ENCODE measurements at regions of chr3 and their contacts with region 1.

Region 1: DNA sequence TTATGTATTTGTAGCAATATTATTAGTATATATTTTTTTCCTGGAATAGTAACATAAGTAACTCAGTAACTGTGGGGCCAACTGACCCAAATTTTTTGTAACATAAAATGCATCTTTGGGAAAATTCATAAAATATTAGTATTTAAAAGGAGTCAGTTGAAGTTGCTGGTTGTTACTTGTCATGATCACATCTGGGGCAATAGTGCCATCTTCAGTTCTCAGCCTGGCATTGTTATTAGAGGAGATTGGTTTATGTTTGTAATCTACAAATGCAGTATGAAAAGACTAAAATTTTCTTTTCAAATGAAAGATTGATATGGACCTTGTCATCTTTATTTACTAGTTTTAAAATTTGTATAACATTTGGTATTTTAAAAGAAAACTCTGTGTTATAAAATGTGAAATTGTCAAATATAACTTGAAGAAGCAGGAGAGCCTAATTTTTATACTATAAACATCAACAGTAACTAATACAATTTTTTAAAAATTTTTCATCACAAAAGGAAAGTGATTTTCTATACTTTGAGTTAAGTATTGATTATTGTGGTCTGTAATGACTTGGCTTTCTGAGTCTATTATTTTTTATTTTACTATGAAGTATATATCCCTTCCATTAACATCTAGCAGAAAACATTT is 38.8 kb upstream of the MLF1 start:
- DNase-seq: no peak
- ATAC-seq: no peak
- H3K4me3 ChIP-seq: no peak overlapping the region
- H3K27ac ChIP-seq: no peak overlapping the region
- H3K4me1 ChIP-seq: no peaks in the 10 kb centered on the region
- H3K27me3 ChIP-seq: no peaks in the 10 kb centered on the region
- CTCF ChIP-seq: peak; percentile 44

Region 2: DNA sequence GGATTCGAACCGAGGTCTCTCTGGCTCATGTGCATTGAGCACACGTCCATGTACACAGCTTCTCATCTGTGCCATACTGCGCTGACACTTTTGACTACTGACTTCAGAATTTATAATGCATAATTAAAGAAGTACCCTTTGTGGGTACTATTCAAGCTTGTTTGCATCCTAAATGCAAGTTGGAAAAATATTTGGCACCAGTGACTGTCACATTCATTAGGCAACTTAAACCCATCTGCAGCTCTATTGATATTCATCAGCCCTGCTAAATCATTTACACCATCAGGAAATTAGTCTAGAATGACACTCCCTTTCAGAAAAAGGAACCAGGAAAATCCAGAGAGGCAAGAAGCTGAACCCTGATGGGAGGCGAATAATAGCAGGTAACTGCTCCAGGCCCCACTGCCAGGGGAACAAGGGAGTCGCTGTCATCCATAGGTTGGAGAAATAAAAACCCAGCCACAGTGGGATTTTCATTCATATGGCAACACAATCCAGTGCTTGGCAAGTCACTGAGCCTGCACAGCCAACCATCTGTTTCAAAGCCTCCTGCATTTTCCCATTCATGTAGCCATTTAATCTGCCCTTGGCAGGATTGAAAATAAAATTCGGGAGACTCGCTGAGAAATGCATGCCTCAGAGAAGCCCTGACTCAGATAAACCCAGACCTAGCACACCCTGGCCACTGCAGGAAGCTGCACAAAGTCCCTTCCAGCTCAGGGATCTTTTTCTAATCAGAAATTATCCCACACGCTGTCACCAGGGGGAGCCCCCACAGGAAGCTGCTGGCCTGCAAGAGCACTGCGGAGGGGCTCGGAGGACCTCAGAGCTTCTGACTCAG is 926.0 kb before region 1 on chr3:
- intact Hi-C with region 1: loop called in 1 of 2 experiments (anchors 5 kb)
- DNase-seq: peak; percentile 40 to 65
- ATAC-seq: peak; percentile 37 to 80 (median 67)
- H3K4me3 ChIP-seq: no peak overlapping the region
- H3K27ac ChIP-seq: no peak overlapping the region
- H3K4me1 ChIP-seq: no peaks in the 10 kb centered on the region
- H3K27me3 ChIP-seq: no peaks in the 10 kb centered on the region
- CTCF ChIP-seq: peak; percentile 65

Region 3: DNA sequence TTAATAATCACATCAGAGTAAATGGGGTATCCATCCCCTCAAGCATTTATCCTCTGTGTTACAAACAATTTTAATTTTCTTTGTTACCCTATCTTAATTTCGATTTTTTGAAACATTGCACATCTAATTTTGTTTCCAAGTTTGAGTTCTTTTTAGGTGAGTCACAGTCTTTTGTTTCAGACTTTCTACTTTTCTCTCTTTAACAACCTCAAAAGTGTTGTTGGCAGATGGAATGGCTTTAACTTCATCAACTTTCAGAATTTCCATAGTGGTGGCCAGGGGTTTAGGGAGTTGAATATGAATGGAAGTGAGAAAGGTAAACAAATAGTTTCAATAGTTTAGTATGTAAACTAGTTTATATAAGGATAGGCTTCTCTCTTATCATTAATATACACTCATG is 184.3 kb before region 1 on chr3:
- intact Hi-C with region 1: no loop called
- DNase-seq: no peak
- ATAC-seq: no peak
- H3K4me3 ChIP-seq: no peak overlapping the region
- H3K27ac ChIP-seq: no peak overlapping the region
- H3K4me1 ChIP-seq: no peaks in the 10 kb centered on the region
- H3K27me3 ChIP-seq: no peaks in the 10 kb centered on the region
- CTCF ChIP-seq: no peak

Region 4: GRCh38 chr3:158602227-158602626 is 70.0 kb after region 1 on chr3:
- intact Hi-C with region 1: no loop called
- DNase-seq: no peak
- ATAC-seq: no peak
- H3K4me3 ChIP-seq: no peak overlapping the region
- H3K27ac ChIP-seq: no peak overlapping the region
- H3K4me1 ChIP-seq: no peaks in the 10 kb centered on the region
- H3K27me3 ChIP-seq: no peaks in the 10 kb centered on the region
- CTCF ChIP-seq: no peak